ENCODE measurements at regions of chr6 and their contacts with region 1.

Region 1: DNA sequence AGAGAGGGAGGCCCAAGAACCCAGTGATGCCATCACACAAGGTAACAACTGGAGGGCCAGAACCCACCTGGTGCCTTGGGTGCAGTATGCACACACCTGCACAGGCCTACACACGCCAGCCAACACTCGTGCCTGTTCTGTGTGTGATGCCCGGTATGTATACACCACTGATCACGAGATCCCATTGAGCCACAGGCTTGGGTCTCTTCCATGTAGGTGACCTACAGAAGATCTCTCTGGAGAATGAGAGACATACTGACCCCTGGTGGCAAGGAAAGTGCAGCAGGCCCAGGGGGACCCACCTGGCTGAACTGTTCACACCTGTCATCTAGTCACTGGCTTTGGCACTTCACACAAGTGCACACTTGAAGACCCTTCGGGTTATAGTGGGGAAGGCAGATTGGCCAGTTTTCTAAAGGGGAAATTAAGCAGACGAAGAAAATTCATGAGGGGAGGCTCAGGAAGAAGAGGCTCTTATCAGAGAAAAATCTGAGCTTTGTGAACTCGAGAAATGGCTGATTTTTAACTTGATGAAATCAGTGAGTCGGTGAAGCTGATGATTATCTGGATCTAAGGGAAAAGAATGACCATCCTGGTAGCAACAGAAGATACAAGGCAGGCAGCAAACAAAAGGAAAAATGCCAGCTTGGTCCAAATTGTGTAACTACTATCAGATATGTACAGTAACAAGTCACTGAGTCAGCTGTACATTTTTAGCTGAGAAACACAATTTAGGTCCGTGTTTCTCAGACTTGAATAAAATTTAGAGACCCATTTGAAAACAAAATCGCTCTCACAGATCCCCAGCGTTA is 69.1 kb upstream of the PBOV1 start:
- DNase-seq: peak in 12 of 14 experiments; percentile 8 to 65 (median 34)
- ATAC-seq: no peak
- H3K4me3 ChIP-seq: no peak overlapping the region
- H3K4me3 Mint-ChIP-seq: no peak overlapping the region
- H3K27ac ChIP-seq: no peak overlapping the region
- H3K27ac Mint-ChIP-seq: no peak overlapping the region
- H3K4me1 ChIP-seq: no peaks in the 10 kb centered on the region
- H3K4me1 Mint-ChIP-seq: no peaks in the 10 kb centered on the region
- H3K27me3 ChIP-seq: no peaks in the 10 kb centered on the region
- H3K27me3 Mint-ChIP-seq: peaks cover 3% of the 10 kb centered on the region
- CTCF ChIP-seq: peak; percentile 57

Region 2: DNA sequence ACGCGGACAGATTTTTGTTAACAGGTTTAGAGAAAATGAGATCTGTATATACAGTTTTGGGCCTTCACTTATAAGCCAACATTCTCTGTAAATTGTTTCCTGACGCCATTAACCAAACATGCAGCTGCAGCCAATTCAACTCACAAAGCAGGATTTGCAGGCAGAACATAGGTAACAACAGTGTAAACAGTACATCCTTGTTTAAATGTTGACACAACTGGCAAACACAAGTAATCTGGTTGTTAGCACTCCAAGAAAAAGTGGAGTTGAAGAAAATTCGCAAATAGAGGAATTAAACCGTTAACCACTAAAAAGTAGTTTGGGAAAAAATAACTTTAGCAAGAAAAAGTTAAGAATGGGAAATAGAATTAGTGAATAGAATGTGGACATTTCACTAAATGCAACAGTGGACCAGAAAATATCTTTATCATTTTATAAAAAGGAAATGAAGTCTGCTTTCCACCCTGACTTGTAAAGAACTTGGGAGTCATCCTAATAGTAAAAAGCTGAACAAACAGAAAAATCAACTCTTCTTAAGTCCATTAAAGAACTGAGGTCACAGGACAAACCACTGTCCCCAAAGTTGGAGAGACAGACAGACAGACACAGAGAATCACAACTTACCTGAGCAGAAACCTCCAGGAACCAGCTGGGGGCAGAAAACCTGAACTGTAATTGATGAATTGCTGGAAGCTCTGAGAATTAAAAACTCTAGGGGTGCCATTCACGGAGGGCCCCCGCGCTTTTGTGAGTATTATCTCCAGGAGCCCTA is 100.4 kb after region 1 on chr6:
- CTCF ChIA-PET with region 1: no interaction called
- POLR2A ChIA-PET with region 1: no interaction called
- intact Hi-C with region 1: no loop called
- DNase-seq: no peak
- ATAC-seq: no peak
- H3K4me3 ChIP-seq: no peak overlapping the region
- H3K4me3 Mint-ChIP-seq: no peak overlapping the region
- H3K27ac ChIP-seq: no peak overlapping the region
- H3K27ac Mint-ChIP-seq: no peak overlapping the region
- H3K4me1 ChIP-seq: no peaks in the 10 kb centered on the region
- H3K4me1 Mint-ChIP-seq: no peaks in the 10 kb centered on the region
- H3K27me3 ChIP-seq: peaks cover 4% of the 10 kb centered on the region in 2 experiments
- H3K27me3 Mint-ChIP-seq: peaks cover 22% of the 10 kb centered on the region
- CTCF ChIP-seq: no peak

Region 3: DNA sequence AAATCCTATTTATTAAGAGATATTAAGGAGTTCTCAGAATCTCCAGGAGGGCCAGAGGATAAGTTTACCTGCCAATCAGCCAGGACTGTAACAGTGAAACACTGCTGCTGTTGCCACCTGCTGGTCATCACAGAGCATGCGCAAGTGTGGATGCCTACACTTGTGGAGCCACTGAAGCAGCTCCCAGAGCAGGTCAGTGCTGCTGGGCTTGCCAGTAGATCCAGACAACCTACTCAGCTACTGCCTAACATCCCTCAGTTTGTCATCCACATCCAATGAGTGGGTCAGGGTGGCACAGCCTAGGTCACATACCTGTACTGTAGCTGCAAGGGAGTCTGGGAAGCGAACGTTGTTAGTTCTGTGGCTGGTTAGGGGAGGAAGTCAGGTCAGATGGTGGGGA is 230.3 kb after region 1 on chr6:
- CTCF ChIA-PET with region 1: no interaction called
- POLR2A ChIA-PET with region 1: no interaction called
- intact Hi-C with region 1: loop called in 1 of 2 experiments (anchors 10 kb)
- DNase-seq: peak; percentile 28 to 78 (median 44)
- ATAC-seq: peak; percentile 81
- H3K4me3 ChIP-seq: no peak overlapping the region
- H3K4me3 Mint-ChIP-seq: no peak overlapping the region
- H3K27ac ChIP-seq: no peak overlapping the region
- H3K27ac Mint-ChIP-seq: no peak overlapping the region
- H3K4me1 ChIP-seq: peaks cover 6% of the 10 kb centered on the region
- H3K4me1 Mint-ChIP-seq: peaks cover 10% of the 10 kb centered on the region
- H3K27me3 ChIP-seq: no peaks in the 10 kb centered on the region
- H3K27me3 Mint-ChIP-seq: peaks cover 15% of the 10 kb centered on the region
- CTCF ChIP-seq: peak; percentile 78

Region 4: GRCh38 chr6:139829576-139829975 is 1542.2 kb after region 1 on chr6:
- CTCF ChIA-PET with region 1: no interaction called
- POLR2A ChIA-PET with region 1: no interaction called
- intact Hi-C with region 1: no loop called
- DNase-seq: no peak
- ATAC-seq: no peak
- H3K4me3 ChIP-seq: no peak overlapping the region
- H3K4me3 Mint-ChIP-seq: no peak overlapping the region
- H3K27ac ChIP-seq: no peak overlapping the region
- H3K27ac Mint-ChIP-seq: no peak overlapping the region
- H3K4me1 ChIP-seq: no peaks in the 10 kb centered on the region
- H3K4me1 Mint-ChIP-seq: no peaks in the 10 kb centered on the region
- H3K27me3 ChIP-seq: no peaks in the 10 kb centered on the region
- H3K27me3 Mint-ChIP-seq: peaks cover 47% of the 10 kb centered on the region
- CTCF ChIP-seq: no peak

Measured in CD4-positive, alpha-beta T cell (primary cell).